ENCODE measurements at regions of chr10 and their contacts with region 1.

Region 1: GRCh38 chr10:94623572-94623971 is 60.0 kb upstream of the CYP2C18 start:
- DNase-seq: no peak
- H3K4me3 ChIP-seq: no peak overlapping the region
- H3K27ac ChIP-seq: no peak overlapping the region
- H3K4me1 ChIP-seq: no peaks in the 10 kb centered on the region
- H3K27me3 ChIP-seq: no peaks in the 10 kb centered on the region
- CTCF ChIP-seq: no peak
- POLR2A ChIP-seq: no peak

Region 2: GRCh38 chr10:94607111-94607510 is 16.5 kb before region 1 on chr10:
- intact Hi-C with region 1: loop called (anchors 1 kb)
- DNase-seq: no peak
- H3K4me3 ChIP-seq: no peak overlapping the region
- H3K27ac ChIP-seq: no peak overlapping the region
- H3K4me1 ChIP-seq: no peaks in the 10 kb centered on the region
- H3K27me3 ChIP-seq: no peaks in the 10 kb centered on the region
- CTCF ChIP-seq: no peak
- POLR2A ChIP-seq: no peak